Activated B cell treated with CpG ODN at 0.5 μM for 24 hours (primary cell): ENCODE measurements at regions of chr6 and their contacts with region 1.

Region 1: GRCh38 chr6:125314019-125314581 is 12.3 kb upstream of the HDDC2 start:
- DNase-seq: no peak
- ATAC-seq: peak; percentile 83
- H3K4me3 Mint-ChIP-seq: no peak overlapping the region
- H3K27ac Mint-ChIP-seq: no peak overlapping the region
- H3K4me1 Mint-ChIP-seq: peaks cover 2% of the 10 kb centered on the region
- H3K27me3 Mint-ChIP-seq: peaks cover 6% of the 10 kb centered on the region
- CTCF ChIP-seq: peak; percentile 70

Region 2: DNA sequence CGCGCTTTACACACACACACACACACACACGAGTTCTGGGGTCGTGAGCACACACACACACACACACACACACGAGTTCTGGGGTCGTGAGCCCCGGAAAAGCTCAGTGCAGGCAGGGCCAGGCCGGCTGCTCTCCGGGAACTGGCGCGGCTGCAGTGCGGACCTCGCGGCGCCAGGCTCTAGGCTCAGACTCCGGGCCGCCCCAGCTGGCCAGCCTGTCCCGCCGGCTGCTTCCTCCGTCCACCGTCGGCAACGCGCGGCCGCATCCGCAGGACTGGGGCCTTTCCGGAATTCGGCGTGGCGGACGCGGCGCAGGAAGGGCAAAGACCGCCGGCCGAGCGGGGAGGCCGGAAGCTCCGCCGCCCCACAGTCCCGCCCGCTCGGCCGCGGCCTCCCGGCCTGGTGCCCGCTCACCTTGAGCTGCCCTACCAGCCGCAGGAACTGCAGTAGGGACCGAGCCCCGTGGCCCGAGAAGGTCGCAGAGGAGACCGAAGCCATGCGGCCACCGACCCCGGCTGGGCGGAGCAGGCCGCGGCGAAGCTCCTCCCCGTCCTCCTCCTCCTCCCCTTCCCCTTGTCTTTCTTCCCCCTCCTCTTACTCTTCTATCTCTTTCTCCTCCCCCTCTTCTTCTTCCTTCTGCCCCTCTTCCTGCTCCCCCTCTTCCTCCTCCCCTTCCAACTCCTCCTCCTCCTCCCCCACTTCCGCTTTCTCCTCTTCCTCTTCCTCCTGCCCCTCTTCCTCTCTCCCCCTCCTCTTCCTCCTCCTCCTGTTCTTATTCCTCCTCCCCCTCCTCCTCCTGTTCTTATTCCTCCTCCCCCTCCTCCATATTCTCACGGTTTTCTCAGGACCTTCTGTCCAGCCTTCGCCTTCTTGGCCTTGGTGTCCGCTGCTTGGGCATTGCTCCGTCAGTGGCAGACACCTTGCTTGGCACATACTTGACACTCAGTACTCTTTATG is 12.4 kb before region 1 on chr6 and contains the start of gene HDDC2:
- CTCF ChIA-PET with region 1: interaction called, 10 read pairs
- POLR2A ChIA-PET with region 1: no interaction called
- intact Hi-C with region 1: no loop called
- DNase-seq: peak; percentile 53
- ATAC-seq: peak; percentile 78
- H3K4me3 Mint-ChIP-seq: peak within 1 kb of the TSS; percentile 89
- H3K27ac Mint-ChIP-seq: peak within 1 kb of the TSS; percentile 78
- H3K4me1 Mint-ChIP-seq: peaks cover 38% of the 10 kb centered on the region
- H3K27me3 Mint-ChIP-seq: peaks cover 14% of the 10 kb centered on the region
- CTCF ChIP-seq: no peak
- total RNA-seq, gene HDDC2: 53.1 and 55.8 TPM in 2 replicates

Region 3: GRCh38 chr6:125749173-125749864 is 435.2 kb after region 1 on chr6 and contains the start of gene HEY2:
- CTCF ChIA-PET with region 1: interaction called, 200 read pairs
- POLR2A ChIA-PET with region 1: no interaction called
- intact Hi-C with region 1: loop called (anchors 1 kb)
- DNase-seq: peak; percentile 92
- ATAC-seq: peak; percentile 91
- H3K4me3 Mint-ChIP-seq: peak within 1 kb of the TSS; percentile 81
- H3K27ac Mint-ChIP-seq: peak within 1 kb of the TSS; percentile 61
- H3K4me1 Mint-ChIP-seq: peaks cover 40% of the 10 kb centered on the region
- H3K27me3 Mint-ChIP-seq: peaks cover 46% of the 10 kb centered on the region
- CTCF ChIP-seq: no peak
- total RNA-seq, gene HEY2: not detected in 2 replicates

Region 4: DNA sequence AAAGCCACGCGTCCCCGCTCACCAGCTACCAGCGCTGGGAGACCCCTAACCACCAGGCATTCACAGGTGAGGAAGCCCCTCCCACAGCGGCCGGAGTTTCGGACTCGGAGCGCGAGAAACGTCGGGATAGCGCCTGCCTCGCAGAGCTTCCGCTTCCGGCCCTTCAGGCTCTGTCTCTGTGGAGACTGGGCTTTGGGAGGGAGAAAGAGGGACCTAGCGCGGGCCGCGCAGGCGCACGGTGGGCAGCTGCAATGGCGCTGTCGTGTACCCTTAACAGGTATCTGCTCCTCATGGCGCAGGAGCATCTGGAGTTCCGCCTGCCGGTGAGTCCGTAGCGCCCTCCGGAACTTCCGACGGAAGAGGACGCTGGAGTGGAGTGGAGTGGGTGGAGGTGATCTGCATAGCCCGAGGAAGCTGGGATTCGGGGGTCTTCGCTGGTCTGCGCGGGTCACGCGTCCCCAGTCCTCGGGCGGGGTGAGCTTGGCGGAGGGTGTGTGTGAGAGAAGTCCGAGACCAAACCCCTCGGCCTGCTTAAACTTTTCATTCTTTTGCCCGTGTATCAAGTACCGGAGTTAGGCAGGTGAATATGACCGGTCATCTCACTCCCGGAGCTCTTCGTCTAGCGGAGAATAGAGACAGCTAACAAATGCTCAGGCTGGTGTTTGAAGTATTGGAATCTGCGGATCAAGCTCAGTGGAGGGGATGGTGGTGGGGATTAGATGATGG is 672.4 kb after region 1 on chr6 and contains the start of gene TRMT11:
- CTCF ChIA-PET with region 1: no interaction called
- POLR2A ChIA-PET with region 1: no interaction called
- intact Hi-C with region 1: loop called (anchors 5 kb)
- DNase-seq: peak; percentile 70
- ATAC-seq: peak; percentile 95
- H3K4me3 Mint-ChIP-seq: peak within 1 kb of the TSS; percentile 25
- H3K27ac Mint-ChIP-seq: no peak within 1 kb of the TSS
- H3K4me1 Mint-ChIP-seq: peaks cover 9% of the 10 kb centered on the region
- H3K27me3 Mint-ChIP-seq: no peaks in the 10 kb centered on the region
- CTCF ChIP-seq: no peak
- total RNA-seq, gene TRMT11: 24.6 and 33.4 TPM in 2 replicates

Region 5: DNA sequence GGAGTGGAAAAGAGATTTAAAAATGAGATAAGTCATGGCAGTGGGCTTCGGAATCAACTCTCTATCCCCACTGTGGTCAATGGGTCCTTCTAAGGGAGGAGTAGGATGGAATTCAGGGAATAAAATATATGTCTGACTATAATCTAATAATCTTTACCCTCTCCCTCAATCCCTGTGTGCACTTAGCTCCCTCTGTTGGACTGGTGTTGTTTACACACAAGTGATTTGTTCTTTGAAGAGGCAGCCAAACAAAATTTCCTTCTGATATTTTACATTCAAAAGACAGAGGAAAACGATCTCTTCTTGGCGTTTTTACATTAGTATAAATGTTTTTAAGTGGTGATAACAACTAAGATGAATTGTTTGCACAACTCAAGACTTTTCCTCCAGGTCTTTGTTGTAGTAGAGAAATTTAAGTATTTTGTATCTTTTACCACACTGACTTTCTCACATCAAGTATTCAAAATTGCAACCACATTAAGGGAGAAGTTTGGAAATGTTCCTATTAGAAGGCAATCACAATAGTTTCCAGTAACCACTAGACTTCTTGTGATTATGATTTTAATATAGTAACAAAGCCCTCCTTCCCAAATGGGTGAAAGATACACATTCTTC is 1343.6 kb after region 1 on chr6:
- CTCF ChIA-PET with region 1: no interaction called
- POLR2A ChIA-PET with region 1: no interaction called
- intact Hi-C with region 1: loop called (anchors 5 kb)
- DNase-seq: no peak
- ATAC-seq: no peak
- H3K4me3 Mint-ChIP-seq: no peak overlapping the region
- H3K27ac Mint-ChIP-seq: no peak overlapping the region
- H3K4me1 Mint-ChIP-seq: no peaks in the 10 kb centered on the region
- H3K27me3 Mint-ChIP-seq: no peaks in the 10 kb centered on the region
- CTCF ChIP-seq: no peak